Activated T-helper 2 cell treated with anti-CD3 and anti-CD28 coated beads, Interferon-gamma antibody, Interleukin-2, Interleukin-4, amounts not matched to agents 10 μg/mL and 5 μg/mL and 100 μg/mL, durations not matched to agents 14 hours and 24 hours and 36 hours (primary cell): ENCODE measurements at regions of chr4 and their contacts with region 1.

Region 1: DNA sequence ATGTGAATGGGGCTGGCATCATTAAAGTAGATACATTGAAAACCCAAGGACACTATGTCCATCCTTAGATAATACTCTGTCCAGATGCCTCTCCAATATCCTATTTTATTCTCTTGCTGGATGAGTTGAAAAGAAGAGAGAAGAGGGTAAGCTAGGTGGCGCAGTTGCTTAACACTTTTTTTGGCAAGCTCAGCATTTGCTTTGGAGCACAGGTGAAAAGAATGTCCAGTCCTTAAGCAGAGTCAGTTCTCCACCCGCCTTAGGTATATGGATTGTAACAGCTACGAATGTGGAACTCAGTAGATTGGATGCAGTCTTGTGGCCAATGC is 208.4 kb downstream of the NWD2 start:
- DNase-seq: peak; percentile 23
- H3K4me3 Mint-ChIP-seq: peak overlapping the region; percentile 37
- H3K27ac Mint-ChIP-seq: no peak overlapping the region
- H3K4me1 Mint-ChIP-seq: peaks cover 7% of the 10 kb centered on the region
- H3K27me3 Mint-ChIP-seq: peaks cover 58% of the 10 kb centered on the region

Region 2: GRCh38 chr4:37389967-37390580 is 62.8 kb before region 1 on chr4:
- intact Hi-C with region 1: no loop called
- DNase-seq: no peak
- H3K4me3 Mint-ChIP-seq: no peak overlapping the region
- H3K27ac Mint-ChIP-seq: no peak overlapping the region
- H3K4me1 Mint-ChIP-seq: peaks cover 8% of the 10 kb centered on the region
- H3K27me3 Mint-ChIP-seq: peaks cover 2% of the 10 kb centered on the region

Region 3: DNA sequence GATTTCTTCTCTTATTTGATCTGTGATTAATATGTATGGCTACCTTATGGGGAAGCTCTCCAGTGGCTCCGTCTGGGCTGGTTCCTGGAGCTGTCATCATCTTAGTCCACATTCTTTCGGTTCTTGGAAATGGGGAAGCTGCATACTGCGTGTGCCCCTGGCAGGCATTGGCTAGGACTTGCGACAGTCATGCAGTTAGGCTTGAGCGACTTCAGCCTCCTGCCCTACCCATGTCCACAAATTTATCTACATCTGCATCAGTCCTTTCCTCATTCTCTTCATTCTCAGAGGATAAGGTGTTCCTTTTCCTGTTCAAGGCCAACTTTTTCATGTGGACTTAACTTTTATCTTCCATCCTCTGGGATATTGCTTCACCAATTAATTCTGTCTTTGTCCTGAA is 19.1 kb after region 1 on chr4:
- intact Hi-C with region 1: no loop called
- DNase-seq: no peak
- H3K4me3 Mint-ChIP-seq: no peak overlapping the region
- H3K27ac Mint-ChIP-seq: no peak overlapping the region
- H3K4me1 Mint-ChIP-seq: no peaks in the 10 kb centered on the region
- H3K27me3 Mint-ChIP-seq: peaks cover 20% of the 10 kb centered on the region

Region 4: DNA sequence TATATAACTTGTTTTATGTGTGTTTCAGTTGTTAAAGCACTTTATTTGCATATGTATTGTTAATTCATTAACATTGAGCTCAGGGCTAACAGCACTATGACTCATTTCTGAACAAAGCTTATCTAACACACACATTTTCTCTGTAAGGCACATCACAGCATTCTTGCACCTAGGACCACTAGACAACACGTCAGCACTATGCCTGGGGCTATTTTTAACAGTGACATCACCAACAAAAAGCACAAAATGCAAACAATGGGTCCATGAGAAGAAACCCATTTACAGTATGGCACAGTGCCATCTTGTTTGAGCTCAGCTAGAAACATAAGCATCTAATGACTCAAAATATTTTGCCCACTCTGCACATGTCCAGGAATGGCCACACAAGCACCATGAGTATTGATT is 108.9 kb after region 1 on chr4:
- intact Hi-C with region 1: loop called (anchors 1 kb)
- DNase-seq: no peak
- H3K4me3 Mint-ChIP-seq: no peak overlapping the region
- H3K27ac Mint-ChIP-seq: no peak overlapping the region
- H3K4me1 Mint-ChIP-seq: no peaks in the 10 kb centered on the region
- H3K27me3 Mint-ChIP-seq: no peaks in the 10 kb centered on the region

Region 5: DNA sequence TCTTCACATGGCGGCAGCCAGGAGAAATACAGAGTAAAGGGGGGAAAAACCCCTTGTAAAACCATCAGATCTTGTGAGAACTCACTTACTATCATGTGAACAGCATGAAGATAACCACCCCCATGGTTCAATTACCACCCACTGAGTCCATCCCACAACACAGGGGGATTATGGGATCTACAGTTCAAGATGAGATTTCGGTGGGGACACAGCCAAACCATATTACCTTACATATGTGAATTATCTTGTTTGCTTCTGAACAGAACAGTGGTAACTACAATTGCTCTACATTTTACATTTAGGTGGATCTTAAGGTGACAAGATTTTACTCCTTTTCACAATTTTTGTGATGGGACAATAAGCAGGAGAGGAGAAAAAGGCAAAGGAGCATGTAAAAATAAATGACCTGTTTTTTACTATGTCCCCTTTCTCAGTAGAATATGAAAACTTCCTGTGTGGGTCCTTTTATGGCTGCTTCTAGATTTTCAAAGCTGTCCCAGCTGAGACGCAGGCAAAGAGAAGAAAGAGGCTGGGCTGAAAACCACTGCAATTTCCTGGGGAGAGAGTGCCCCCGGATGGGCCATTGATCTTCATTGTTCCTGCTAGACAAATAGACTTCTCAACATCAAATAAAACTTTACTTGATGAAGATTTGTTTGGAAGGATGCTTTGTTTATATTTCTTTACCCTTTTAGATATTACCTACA is 327.7 kb after region 1 on chr4:
- intact Hi-C with region 1: loop called (anchors 5 kb)
- DNase-seq: peak; percentile 28
- H3K4me3 Mint-ChIP-seq: no peak overlapping the region
- H3K27ac Mint-ChIP-seq: no peak overlapping the region
- H3K4me1 Mint-ChIP-seq: peaks cover 10% of the 10 kb centered on the region
- H3K27me3 Mint-ChIP-seq: no peaks in the 10 kb centered on the region

Region 6: DNA sequence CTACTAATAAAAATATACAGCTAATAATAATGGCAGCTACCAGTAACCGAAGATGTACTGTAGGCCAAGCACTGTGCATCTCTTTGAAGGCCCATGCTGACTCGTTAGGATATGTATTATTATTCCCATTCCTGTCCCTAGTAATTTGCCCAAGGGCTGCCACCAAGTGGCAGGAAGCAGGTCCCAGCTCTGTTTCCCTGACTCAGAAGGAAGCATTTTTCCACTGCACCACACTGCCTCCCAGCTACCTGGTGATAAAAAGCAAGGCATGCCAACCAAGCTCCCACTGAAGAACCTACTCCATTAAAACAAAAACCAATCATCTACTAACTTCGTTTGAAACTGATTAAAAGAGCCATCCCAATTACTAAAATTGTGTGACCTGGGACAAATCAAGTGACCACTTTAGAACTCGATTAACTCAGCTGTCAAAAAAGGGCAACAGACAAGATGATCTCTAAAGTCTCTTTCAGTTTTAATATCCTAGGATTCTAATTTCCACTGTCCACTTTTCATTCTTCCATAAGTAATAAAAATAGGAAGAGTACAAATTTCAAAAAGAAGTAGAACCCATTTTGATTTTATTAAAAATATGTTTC is 349.3 kb after region 1 on chr4:
- intact Hi-C with region 1: loop called (anchors 5 kb)
- DNase-seq: no peak
- H3K4me3 Mint-ChIP-seq: no peak overlapping the region
- H3K27ac Mint-ChIP-seq: no peak overlapping the region
- H3K4me1 Mint-ChIP-seq: no peaks in the 10 kb centered on the region
- H3K27me3 Mint-ChIP-seq: peaks cover 14% of the 10 kb centered on the region

Region 7: GRCh38 chr4:38034986-38035882 is 582.3 kb after region 1 on chr4:
- intact Hi-C with region 1: loop called (anchors 5 kb)
- DNase-seq: no peak
- H3K4me3 Mint-ChIP-seq: no peak overlapping the region
- H3K27ac Mint-ChIP-seq: no peak overlapping the region
- H3K4me1 Mint-ChIP-seq: no peaks in the 10 kb centered on the region
- H3K27me3 Mint-ChIP-seq: no peaks in the 10 kb centered on the region